ENCODE measurements at regions of chr12 and their contacts with region 1.

Region 1: DNA sequence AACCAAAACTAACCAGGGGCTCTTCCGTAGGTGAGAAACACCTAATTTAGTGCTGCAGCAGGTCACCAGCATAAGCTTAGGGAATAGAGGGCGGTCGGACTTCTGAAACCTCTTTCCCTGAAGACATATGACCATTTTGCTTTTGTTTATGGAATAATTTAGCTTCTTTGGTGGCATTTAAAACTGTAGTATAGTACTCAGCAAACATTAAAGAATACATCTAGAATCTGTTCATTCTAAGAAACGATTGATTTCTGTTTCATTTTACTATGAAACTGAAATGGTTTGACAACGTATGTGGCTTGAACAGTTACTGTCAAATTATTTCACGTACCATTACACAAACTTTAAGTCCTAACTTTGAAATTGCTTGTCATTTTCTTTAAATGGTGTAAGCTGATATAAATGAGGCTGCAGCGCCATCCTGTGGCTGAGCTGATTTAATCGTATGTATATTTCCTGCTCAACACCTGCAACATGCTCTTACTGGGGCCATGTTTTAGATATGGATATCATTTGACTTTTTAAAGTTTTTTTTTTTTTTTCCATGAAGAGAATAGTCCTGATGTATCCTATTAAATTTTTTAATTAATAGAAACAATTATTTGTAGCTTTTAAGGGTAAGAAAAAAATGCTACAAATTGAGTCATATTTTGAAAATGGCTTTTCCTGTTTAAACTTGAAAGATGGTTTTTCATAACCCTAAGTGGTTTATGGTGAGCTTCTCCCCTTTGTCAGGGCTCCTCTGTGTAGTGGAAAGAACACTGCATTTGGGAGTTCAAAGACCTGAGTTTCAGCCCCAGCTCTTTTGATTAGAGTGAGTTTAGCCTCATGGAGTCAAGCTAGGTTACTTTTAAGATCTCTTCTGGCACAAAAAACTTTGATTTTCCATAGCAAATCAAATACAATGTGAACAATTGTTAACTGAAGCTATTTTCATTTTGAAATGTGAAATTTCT is 27.4 kb downstream of the CFAP54 start:
- DNase-seq: peak; percentile 85
- H3K4me3 ChIP-seq: no peak overlapping the region
- H3K27ac ChIP-seq: peak overlapping the region in 1 of 4 donors; percentile 8
- H3K4me1 ChIP-seq: peaks cover 0 to 3% (median 2%) of the 10 kb centered on the region in 4 donors
- H3K27me3 ChIP-seq: no peaks in the 10 kb centered on the region
- CTCF ChIP-seq: peak; percentile 57 to 84 (median 65)
- EP300 ChIP-seq: no peak
- POLR2A ChIP-seq: no peak

Region 2: GRCh38 chr12:96061864-96062453 is 454.8 kb before region 1 on chr12:
- in situ Hi-C with region 1: loop called (anchors 5 to 10 kb)
- intact Hi-C with region 1: loop called (anchors 5 kb)
- DNase-seq: peak; percentile 83
- H3K4me3 ChIP-seq: no peak overlapping the region
- H3K27ac ChIP-seq: no peak overlapping the region
- H3K4me1 ChIP-seq: no peaks in the 10 kb centered on the region
- H3K27me3 ChIP-seq: no peaks in the 10 kb centered on the region
- CTCF ChIP-seq: peak; percentile 79 to 94 (median 89)
- EP300 ChIP-seq: no peak
- POLR2A ChIP-seq: no peak

Region 3: GRCh38 chr12:96208801-96209549 is 307.8 kb before region 1 on chr12:
- in situ Hi-C with region 1: loop called (anchors 5 to 25 kb)
- intact Hi-C with region 1: loop called (anchors 10 kb)
- DNase-seq: peak; percentile 34
- H3K4me3 ChIP-seq: no peak overlapping the region
- H3K27ac ChIP-seq: peak overlapping the region; percentile 6 to 56 (median 32)
- H3K4me1 ChIP-seq: peaks cover 0 to 37% (median 10%) of the 10 kb centered on the region in 4 donors
- H3K27me3 ChIP-seq: no peaks in the 10 kb centered on the region
- CTCF ChIP-seq: peak in 1 of 5 experiments; percentile 8
- EP300 ChIP-seq: no peak
- POLR2A ChIP-seq: no peak

Region 4: GRCh38 chr12:96219698-96220206 is 297.0 kb before region 1 on chr12:
- in situ Hi-C with region 1: loop called (anchors 5 to 25 kb)
- intact Hi-C with region 1: loop called (anchors 10 kb)
- DNase-seq: no peak
- H3K4me3 ChIP-seq: no peak overlapping the region
- H3K27ac ChIP-seq: no peak overlapping the region
- H3K4me1 ChIP-seq: peaks cover 0 to 17% (median 8%) of the 10 kb centered on the region in 4 donors
- H3K27me3 ChIP-seq: no peaks in the 10 kb centered on the region
- CTCF ChIP-seq: no peak
- EP300 ChIP-seq: no peak
- POLR2A ChIP-seq: no peak

Region 5: GRCh38 chr12:96399919-96400797 is 116.6 kb before region 1 on chr12 and contains the start of gene CDK17:
- in situ Hi-C with region 1: loop called in 1 of 4 experiments (anchors 25 kb)
- intact Hi-C with region 1: loop called (anchors 10 kb)
- DNase-seq: peak; percentile 89
- H3K4me3 ChIP-seq: peak within 1 kb of the TSS; percentile 88 to 99 (median 96)
- H3K27ac ChIP-seq: peak within 1 kb of the TSS; percentile 100
- H3K4me1 ChIP-seq: peaks cover 3 to 43% (median 21%) of the 10 kb centered on the region in 4 donors
- H3K27me3 ChIP-seq: no peaks in the 10 kb centered on the region
- CTCF ChIP-seq: peak in 3 of 5 experiments; percentile 28 to 47 (median 42)
- EP300 ChIP-seq: no peak
- POLR2A ChIP-seq: peak; percentile 82
- total RNA-seq, gene CDK17: 32.5 to 81.4 (median 51.8) TPM

Region 6: DNA sequence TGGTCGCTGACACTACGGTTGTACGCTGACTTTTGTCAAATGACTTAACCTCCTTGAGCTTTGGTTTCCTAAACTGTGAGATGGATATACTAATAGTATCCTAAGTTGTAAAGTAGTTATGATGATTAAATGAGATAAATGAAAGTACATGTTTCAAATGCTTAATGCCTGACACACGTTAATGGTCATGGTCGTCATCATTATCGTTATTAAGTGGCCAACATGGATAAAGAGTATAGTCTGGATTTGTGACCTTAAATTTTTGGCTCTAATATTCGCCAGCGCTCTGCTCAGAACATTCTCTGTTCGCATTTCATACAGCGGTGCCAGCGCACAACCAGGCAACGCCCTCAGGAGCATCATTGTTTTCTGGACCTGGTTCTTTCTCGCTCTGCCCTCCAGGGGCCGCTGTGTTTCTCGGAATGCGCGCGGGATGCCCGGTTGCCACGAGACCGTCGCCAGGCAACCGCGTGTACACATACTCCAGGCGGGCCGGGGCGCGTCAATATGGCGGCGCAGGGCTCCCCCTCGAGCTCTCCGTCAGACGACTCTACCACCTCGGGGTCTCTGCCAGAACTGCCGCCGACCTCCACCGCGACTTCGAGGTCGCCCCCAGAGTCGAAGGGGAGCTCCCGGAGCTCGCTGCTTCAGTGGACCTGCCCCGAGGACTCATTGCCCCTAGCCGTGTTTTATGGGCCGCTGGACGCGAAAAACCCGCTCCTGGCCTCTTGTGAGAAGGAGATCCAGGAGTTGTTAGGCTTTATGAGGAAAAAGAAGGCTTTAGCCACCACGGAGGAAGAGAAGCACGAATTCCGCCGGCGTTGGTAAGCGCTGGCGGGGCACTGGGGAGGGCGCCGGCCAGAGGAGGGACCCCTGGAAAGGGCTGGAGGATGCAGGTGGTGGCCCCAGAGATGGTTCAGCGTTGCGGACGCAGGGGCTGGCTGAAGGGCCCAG is 27.4 kb before region 1 on chr12 and contains the start of gene CFAP54:
- in situ Hi-C with region 1: no loop called
- intact Hi-C with region 1: loop called (anchors 2 kb)
- DNase-seq: peak; percentile 92
- H3K4me3 ChIP-seq: peak within 1 kb of the TSS; percentile 40 to 78 (median 58)
- H3K27ac ChIP-seq: peak within 1 kb of the TSS; percentile 36 to 80 (median 78)
- H3K4me1 ChIP-seq: peaks cover 0 to 7% (median 0%) of the 10 kb centered on the region in 4 donors
- H3K27me3 ChIP-seq: peaks cover 4% of the 10 kb centered on the region
- CTCF ChIP-seq: peak; percentile 75 to 83 (median 77)
- EP300 ChIP-seq: peak; percentile 76
- POLR2A ChIP-seq: no peak
- total RNA-seq, gene CFAP54: 0.14 to 22.3 (median 2.1) TPM in 3 of 4 donors, not detected in the other

Region 7: DNA sequence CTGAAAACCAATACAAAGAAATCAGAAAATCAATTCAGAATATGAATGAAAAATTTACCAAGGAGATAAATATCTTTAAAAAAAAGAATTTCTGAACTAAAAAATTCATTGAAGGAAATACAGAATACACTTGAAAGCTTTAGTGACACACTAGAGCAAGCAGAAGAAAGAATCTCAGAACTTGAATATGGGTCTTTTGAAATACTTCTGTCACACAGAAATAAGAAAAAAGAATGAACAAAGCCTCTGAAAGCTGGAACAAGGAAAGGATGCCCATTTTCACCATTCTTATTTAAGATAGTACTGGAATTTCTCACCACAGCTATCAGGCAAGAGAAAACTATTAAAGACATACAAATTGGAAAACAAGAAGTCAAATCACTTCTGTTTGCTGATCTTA is 287.2 kb after region 1 on chr12:
- in situ Hi-C with region 1: no loop called
- intact Hi-C with region 1: no loop called
- DNase-seq: no peak
- H3K4me3 ChIP-seq: no peak overlapping the region
- H3K27ac ChIP-seq: no peak overlapping the region
- H3K4me1 ChIP-seq: no peaks in the 10 kb centered on the region
- H3K27me3 ChIP-seq: no peaks in the 10 kb centered on the region
- CTCF ChIP-seq: no peak
- EP300 ChIP-seq: no peak
- POLR2A ChIP-seq: no peak

Measured in transverse colon (tissue), 4 donors.